Activated CD4-positive, alpha-beta memory T cell treated with anti-CD3 and anti-CD28 coated beads for 36 hours (primary cell): ENCODE measurements at regions of chr10 and their contacts with region 1.

Region 1: DNA sequence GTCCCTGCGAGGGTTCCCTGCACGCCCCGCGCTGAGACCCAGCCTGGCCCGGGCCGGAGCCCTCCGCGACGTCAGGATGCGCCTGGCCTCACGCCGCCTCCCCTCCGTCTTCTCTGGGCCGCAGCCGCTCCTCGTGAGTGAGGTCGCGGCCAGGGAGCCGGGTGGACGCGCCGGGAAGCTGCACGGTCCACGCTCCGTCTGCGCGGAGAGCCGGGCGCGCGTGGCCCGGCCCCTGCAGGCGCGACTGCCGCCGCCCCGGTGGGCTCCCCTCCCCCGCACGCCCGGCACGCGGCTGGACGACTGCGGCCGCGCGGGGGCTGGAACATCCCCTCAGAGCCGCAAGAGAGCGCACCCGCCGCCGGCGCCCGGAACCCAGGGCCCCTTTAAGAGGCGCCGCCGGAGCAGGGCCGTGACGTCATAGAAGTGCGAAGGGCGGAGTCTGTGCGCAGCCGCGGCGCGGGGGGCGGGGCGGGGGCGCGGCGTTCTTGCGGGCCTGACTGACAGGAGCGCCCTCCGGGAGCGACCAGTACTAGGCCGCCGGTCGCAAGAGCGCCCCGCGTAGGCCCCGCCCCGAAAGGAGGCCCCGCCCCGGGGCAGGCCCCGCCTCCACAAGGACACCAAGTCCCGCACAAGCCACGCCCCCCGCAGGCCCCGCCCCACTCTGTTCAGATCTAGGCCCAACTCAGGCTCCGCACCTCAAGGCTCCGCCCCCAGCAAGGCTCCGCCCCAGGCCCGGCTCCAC is 445 bp upstream of the INPP5A start:
- DNase-seq: peak; percentile 100
- H3K4me3 Mint-ChIP-seq: peak overlapping the region; percentile 61
- H3K27ac Mint-ChIP-seq: no peak overlapping the region
- H3K4me1 Mint-ChIP-seq: peaks cover 46% of the 10 kb centered on the region
- H3K27me3 Mint-ChIP-seq: peaks cover 2% of the 10 kb centered on the region

Region 2: GRCh38 chr10:132163278-132163765 is 373.8 kb before region 1 on chr10:
- CTCF ChIA-PET with region 1: no interaction called
- POLR2A ChIA-PET with region 1: no interaction called
- intact Hi-C with region 1: loop called (anchors 2 kb)
- DNase-seq: peak; percentile 80
- H3K4me3 Mint-ChIP-seq: no peak overlapping the region
- H3K27ac Mint-ChIP-seq: peak overlapping the region; percentile 9
- H3K4me1 Mint-ChIP-seq: peaks cover 30% of the 10 kb centered on the region
- H3K27me3 Mint-ChIP-seq: no peaks in the 10 kb centered on the region

Region 3: GRCh38 chr10:132331526-132332432 is 205.4 kb before region 1 on chr10 and contains the start of gene LRRC27:
- CTCF ChIA-PET with region 1: no interaction called
- POLR2A ChIA-PET with region 1: no interaction called
- intact Hi-C with region 1: loop called (anchors 1 kb)
- DNase-seq: peak; percentile 99
- H3K4me3 Mint-ChIP-seq: peak within 1 kb of the TSS; percentile 90
- H3K27ac Mint-ChIP-seq: peak within 1 kb of the TSS; percentile 91
- H3K4me1 Mint-ChIP-seq: peaks cover 48% of the 10 kb centered on the region
- H3K27me3 Mint-ChIP-seq: peaks cover 1% of the 10 kb centered on the region
- total RNA-seq, gene LRRC27: 2.5 to 2.8 TPM

Region 4: GRCh38 chr10:132551093-132551807 is 14.1 kb after region 1 on chr10:
- CTCF ChIA-PET with region 1: interaction called, 13 read pairs
- POLR2A ChIA-PET with region 1: interaction called, 6 read pairs
- intact Hi-C with region 1: loop called (anchors 1 kb)
- DNase-seq: peak; percentile 58
- H3K4me3 Mint-ChIP-seq: peak overlapping the region; percentile 38
- H3K27ac Mint-ChIP-seq: peak overlapping the region; percentile 52
- H3K4me1 Mint-ChIP-seq: peaks cover 29% of the 10 kb centered on the region
- H3K27me3 Mint-ChIP-seq: no peaks in the 10 kb centered on the region

Region 5: GRCh38 chr10:132588301-132589013 is 51.3 kb after region 1 on chr10:
- CTCF ChIA-PET with region 1: no interaction called
- POLR2A ChIA-PET with region 1: no interaction called
- intact Hi-C with region 1: loop called (anchors 1 kb)
- DNase-seq: peak; percentile 76
- H3K4me3 Mint-ChIP-seq: no peak overlapping the region
- H3K27ac Mint-ChIP-seq: peak overlapping the region; percentile 34
- H3K4me1 Mint-ChIP-seq: peaks cover 37% of the 10 kb centered on the region
- H3K27me3 Mint-ChIP-seq: no peaks in the 10 kb centered on the region

Region 6: GRCh38 chr10:132627666-132628531 is 90.8 kb after region 1 on chr10:
- CTCF ChIA-PET with region 1: no interaction called
- POLR2A ChIA-PET with region 1: no interaction called
- intact Hi-C with region 1: no loop called
- DNase-seq: peak; percentile 17
- H3K4me3 Mint-ChIP-seq: no peak overlapping the region
- H3K27ac Mint-ChIP-seq: no peak overlapping the region
- H3K4me1 Mint-ChIP-seq: peaks cover 13% of the 10 kb centered on the region
- H3K27me3 Mint-ChIP-seq: no peaks in the 10 kb centered on the region

Region 7: DNA sequence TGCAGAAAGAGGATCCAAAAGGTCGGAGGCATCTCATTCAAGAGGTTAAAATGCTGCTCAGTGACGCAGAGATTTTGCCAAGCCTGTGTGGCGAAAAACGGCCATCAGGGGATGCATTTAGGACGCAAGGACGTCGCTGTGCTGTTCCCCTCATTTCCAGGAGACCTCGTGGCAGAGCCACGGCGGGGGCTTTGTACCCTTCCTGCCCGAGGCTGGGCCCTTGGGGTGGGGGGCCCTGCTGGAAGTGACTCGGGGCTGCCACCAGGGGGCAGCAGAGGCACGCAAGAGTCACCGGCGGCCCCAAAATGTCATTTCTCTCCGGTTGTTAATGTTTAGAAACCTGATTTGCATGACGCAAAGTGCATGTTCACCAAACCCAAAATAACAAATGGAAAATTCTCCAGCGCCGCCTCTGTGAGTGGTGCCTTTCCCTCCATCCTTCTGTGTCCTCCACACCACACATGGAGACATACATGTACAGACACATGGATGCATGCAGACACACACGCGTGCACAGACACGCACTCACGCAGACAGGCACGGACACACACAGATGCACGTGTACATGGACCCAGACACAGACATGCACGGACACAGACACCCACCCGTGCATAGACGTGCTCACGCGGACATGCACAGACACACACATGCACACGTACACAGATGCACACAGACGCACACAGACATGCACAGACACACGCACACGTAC is 299.8 kb after region 1 on chr10:
- CTCF ChIA-PET with region 1: no interaction called
- POLR2A ChIA-PET with region 1: no interaction called
- intact Hi-C with region 1: no loop called
- DNase-seq: peak; percentile 49
- H3K4me3 Mint-ChIP-seq: no peak overlapping the region
- H3K27ac Mint-ChIP-seq: no peak overlapping the region
- H3K4me1 Mint-ChIP-seq: no peaks in the 10 kb centered on the region
- H3K27me3 Mint-ChIP-seq: peaks cover 6% of the 10 kb centered on the region